Right ventricle myocardium superior (tissue), 1 donor: ENCODE measurements at regions of chr11 and their contacts with region 1.

Region 1: DNA sequence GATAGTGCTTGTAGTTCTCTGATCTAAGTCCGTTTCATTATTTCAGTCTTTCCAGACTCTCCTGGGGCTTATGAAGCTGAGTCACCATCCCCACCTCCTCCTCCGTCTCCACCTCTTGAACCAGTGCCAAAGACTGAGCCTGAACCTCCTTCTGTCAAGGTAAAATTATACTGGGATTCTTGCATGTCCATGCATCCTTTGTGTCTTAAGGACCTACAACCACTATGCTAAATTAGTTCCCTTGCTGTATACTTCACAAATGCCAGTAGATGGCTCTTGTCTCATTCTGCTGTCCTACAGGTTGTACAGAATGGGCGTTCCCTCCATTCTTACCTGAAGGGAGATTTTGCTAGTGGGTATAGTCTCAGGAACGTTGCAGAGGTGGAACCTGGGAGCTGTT is 42.2 kb downstream of the POLD3 start:
- DNase-seq: no peak
- ATAC-seq: peak; percentile 81

Region 2: GRCh38 chr11:74602637-74603556 is 31.6 kb before region 1 on chr11:
- intact Hi-C with region 1: no loop called
- DNase-seq: no peak
- ATAC-seq: no peak

Region 3: GRCh38 chr11:74702383-74703007 is 68.0 kb after region 1 on chr11:
- intact Hi-C with region 1: no loop called
- DNase-seq: peak; percentile 80
- ATAC-seq: peak; percentile 80

Region 4: DNA sequence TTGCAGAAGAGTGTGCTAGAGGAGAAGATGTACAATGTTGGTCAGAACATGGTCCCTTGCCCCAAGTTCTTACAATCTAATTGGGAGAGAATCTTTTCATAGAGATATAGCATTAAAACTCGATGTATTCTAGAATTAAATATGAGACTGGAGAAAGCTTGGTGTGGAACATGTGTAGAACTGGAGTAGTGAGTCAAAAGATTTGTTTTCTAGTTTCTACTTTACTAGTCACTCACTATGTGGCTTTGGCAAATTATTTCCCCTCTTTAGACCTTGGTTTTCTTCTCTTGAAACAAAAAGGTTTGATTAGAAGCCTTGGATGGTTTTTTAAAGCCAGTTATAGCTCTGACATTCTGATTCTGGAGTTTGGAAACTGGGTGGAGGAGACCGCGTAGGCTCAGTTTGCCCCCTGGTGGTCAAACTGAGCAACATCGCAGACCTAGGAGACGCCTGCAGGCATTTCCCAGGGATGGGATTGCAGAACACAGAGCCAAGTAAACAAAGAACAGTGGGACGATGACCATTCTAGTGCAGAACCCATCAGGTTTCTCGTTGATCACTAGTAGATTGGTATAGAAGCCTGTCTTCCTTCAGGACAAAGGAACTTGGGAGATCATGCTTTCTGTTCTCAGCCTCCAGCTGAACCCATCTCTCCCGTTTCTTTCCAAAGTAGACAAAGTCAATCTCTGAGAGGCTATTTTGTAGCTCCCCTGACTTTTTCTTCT is 105.2 kb after region 1 on chr11:
- intact Hi-C with region 1: loop called (anchors 10 kb)
- DNase-seq: peak; percentile 58
- ATAC-seq: peak; percentile 94